Head of caudate nucleus (tissue), 42 donors: ENCODE measurements at regions of chr2 and their contacts with region 1.

Region 1: GRCh38 chr2:168246483-168247340 is 683 bp downstream of the STK39 start:
- DNase-seq: peak; percentile 56 to 94 (median 86)

Region 2: DNA sequence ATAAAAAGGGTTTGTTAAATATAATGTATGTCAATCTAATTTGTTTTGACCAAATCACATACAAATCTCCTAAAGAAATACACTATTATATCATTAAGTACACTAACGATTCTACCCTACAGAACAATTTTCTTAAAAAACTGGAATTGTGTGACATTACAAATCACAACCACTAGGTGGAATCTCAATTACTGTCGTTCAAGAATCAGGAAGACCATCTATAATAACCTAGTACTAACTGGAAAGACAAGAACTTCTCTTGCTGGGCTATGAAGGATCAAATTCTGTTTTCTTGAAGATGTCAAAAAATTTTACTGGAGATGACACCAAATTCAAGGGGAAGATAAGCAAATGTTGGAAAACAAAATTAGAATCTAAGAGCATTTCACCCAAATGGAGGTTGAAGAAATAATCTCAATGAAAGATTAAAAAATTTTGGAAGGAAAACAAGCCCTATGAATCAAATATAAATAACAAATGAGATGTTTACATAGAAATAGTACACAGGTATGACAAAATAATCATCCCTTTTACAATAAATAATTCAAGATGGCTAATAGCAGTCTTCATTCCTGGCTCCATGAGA is 110.2 kb before region 1 on chr2:
- intact Hi-C with region 1: loop called (anchors 5 kb)
- DNase-seq: no peak